GM23248 (cell line): ENCODE measurements at regions of chr3 and their contacts with region 1.

Region 1: DNA sequence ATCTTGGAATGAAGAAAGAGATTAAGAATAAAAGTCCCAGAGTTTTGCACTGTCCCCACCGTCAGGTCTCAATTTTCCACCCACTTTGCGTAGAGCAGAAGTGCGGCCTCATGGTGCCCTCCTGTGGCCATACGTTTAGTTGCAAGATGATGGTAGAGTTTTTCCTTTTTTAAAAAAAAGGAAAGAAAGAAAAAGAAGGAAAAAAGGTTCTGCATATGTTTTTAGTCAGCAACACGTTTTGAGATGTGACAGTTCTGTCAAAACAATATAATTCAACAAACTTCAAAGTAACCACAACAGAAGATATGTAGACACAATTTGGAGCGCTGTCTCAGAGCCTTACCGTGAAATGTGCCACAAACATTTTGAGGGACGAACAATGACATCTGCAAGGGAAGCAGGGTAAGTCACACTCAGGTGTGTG is 24.6 kb downstream of the EBLN2 start:
- DNase-seq: peak; percentile 68
- H3K4me3 ChIP-seq: peak overlapping the region; percentile 38
- H3K27ac ChIP-seq: no peak overlapping the region
- H3K4me1 ChIP-seq: 0 out of 2 replicates have a peak, but pooled peaks cover 3% of the 10 kb centered on the region
- H3K27me3 ChIP-seq: no peaks in the 10 kb centered on the region

Region 2: GRCh38 chr3:71710906-71711494 is 1375.1 kb before region 1 on chr3:
- in situ Hi-C with region 1: loop called (anchors 25 kb)
- DNase-seq: peak; percentile 80
- H3K4me3 ChIP-seq: no peak overlapping the region
- H3K27ac ChIP-seq: no peak overlapping the region
- H3K4me1 ChIP-seq: peaks cover 10% of the 10 kb centered on the region
- H3K27me3 ChIP-seq: no peaks in the 10 kb centered on the region

Region 3: GRCh38 chr3:72855001-72855400 is 231.1 kb before region 1 on chr3:
- in situ Hi-C with region 1: loop called (anchors 10 kb)
- DNase-seq: no peak
- H3K4me3 ChIP-seq: no peak overlapping the region
- H3K27ac ChIP-seq: no peak overlapping the region
- H3K4me1 ChIP-seq: 0 out of 2 replicates have a peak, but pooled peaks cover 4% of the 10 kb centered on the region
- H3K27me3 ChIP-seq: no peaks in the 10 kb centered on the region